Right ventricle myocardium inferior (tissue), 1 donor: ENCODE measurements at regions of chr6 and their contacts with region 1.

Region 1: DNA sequence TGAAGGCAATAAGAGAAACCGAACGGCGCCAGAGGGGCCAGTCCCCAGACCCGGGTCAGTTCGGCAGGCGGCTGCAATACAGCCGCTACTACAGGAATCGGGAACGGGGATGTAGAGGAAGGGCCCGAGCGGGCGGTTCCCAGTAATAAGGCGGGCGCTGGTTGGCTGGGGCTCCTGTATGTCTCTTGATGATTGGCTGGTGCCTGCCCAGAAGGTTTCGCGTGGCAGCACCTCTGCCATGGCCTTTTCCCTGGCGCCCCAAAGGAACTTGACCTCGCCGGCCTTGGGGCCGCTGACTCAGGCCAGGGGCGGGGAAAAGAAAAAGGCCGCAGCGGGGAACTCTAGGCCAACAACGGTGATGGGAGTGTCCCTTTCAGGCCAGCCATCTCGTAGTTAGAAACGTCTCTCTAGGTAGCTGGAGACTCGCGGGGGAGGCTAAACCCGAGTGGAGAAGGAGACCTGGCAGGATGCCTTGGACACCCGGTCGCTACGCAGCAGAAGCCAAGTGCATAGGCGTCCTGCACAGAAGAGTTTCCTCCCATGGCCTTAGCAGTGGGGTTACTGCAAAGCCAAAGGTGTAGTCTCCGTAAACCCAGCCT is at the start of gene IBTK:
- DNase-seq: peak; percentile 96
- ATAC-seq: peak; percentile 99
- total RNA-seq, gene IBTK: 27.6 TPM

Region 2: GRCh38 chr6:83057705-83058321 is 810.1 kb after region 1 on chr6:
- intact Hi-C with region 1: loop called (anchors 5 kb)
- DNase-seq: no peak
- ATAC-seq: no peak

Region 3: GRCh38 chr6:83192871-83193746 is 945.4 kb after region 1 on chr6 and contains the starts of genes PGM3 and RWDD2A:
- intact Hi-C with region 1: loop called (anchors 2 kb)
- DNase-seq: peak; percentile 96
- ATAC-seq: peak; percentile 99
- total RNA-seq, gene PGM3: 12.7 TPM
- total RNA-seq, gene RWDD2A: 2.4 TPM